WTC11 (cell line): ENCODE measurements at regions of chr19 and their contacts with region 1.

Region 1: GRCh38 chr19:2199215-2199614 is 35.5 kb downstream of the DOT1L start:
- DNase-seq: peak; percentile 62
- ATAC-seq: peak; percentile 89
- H3K4me3 Mint-ChIP-seq: no peak overlapping the region
- H3K27ac Mint-ChIP-seq: peak overlapping the region; percentile 83
- H3K4me1 Mint-ChIP-seq: no peaks in the 10 kb centered on the region
- H3K27me3 Mint-ChIP-seq: no peaks in the 10 kb centered on the region
- CTCF ChIP-seq: peak; percentile 47; the same call in 1 of the 2 replicates

Region 2: GRCh38 chr19:2050991-2051772 is 148.0 kb before region 1 on chr19 and contains the start of gene MKNK2:
- CTCF ChIA-PET with region 1: no interaction called
- POLR2A ChIA-PET with region 1: no interaction called
- DNase-seq: peak; percentile 93
- ATAC-seq: peak; percentile 87
- H3K4me3 Mint-ChIP-seq: peak within 1 kb of the TSS; percentile 70
- H3K27ac Mint-ChIP-seq: peak within 1 kb of the TSS; percentile 92
- H3K4me1 Mint-ChIP-seq: peaks cover 11% of the 10 kb centered on the region
- H3K27me3 Mint-ChIP-seq: no peaks in the 10 kb centered on the region
- CTCF ChIP-seq: peak; percentile 56
- total RNA-seq, gene MKNK2: 150 to 165 TPM (median 163 TPM) in 3 replicates

Region 3: DNA sequence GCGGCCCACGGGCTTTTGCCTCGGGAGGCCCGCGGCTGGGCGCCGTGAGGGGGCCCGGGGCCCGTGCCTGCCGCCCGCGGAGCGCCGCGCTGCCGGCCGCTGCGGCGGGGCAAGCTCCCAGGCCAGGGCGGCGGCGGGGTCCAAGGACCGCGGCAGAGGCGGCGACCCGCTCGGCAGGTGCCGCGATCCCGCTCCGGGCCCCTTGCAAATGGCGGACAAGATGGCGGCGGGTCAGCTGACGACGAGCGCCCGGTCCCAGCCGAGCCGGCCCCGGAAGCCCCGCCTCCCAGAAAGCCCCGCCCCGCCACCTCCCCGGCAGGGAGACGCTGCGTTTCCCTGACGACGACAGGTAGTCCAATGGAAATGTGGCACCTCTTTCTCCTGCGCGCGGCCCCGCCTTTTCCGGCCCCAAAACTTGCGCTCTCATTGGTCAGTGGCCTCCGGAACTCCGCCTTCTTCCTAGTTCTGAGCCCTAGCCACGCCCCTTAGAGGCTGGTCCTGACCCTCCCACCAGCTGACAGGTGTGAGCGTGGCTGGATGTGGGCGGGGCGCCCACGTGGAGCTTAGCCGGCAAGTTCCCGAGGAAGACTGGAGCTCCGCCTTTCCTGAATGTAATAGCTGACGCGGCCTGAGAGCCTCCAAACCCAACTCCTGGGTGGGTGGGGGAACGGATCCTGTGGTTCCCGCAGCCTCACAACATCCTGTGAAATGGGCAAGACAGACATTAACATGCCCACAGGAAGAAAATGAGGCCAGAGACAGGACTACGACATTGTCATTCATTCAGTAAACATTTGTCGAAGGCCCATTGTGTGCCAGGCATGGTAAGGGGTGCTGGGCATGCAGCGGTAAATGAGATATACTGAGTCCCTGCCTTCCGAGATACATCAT is 47.6 kb before region 1 on chr19 and contains the start of gene AP3D1:
- CTCF ChIA-PET with region 1: interaction called, 25 read pairs
- POLR2A ChIA-PET with region 1: interaction called, 4 read pairs
- DNase-seq: peak; percentile 100
- ATAC-seq: peak; percentile 93
- H3K4me3 Mint-ChIP-seq: peak within 1 kb of the TSS; percentile 85
- H3K27ac Mint-ChIP-seq: peak within 1 kb of the TSS; percentile 97
- H3K4me1 Mint-ChIP-seq: peaks cover 28% of the 10 kb centered on the region
- H3K27me3 Mint-ChIP-seq: no peaks in the 10 kb centered on the region
- CTCF ChIP-seq: no peak
- total RNA-seq, gene AP3D1: 160 to 190 TPM (median 163 TPM) in 3 replicates

Region 4: GRCh38 chr19:2168619-2169424 is 30.4 kb before region 1 on chr19:
- CTCF ChIA-PET with region 1: interaction called, 20 read pairs
- POLR2A ChIA-PET with region 1: no interaction called
- DNase-seq: no peak
- ATAC-seq: no peak
- H3K4me3 Mint-ChIP-seq: no peak overlapping the region
- H3K27ac Mint-ChIP-seq: peak overlapping the region; percentile 91; the same call in 1 of the 2 replicates
- H3K4me1 Mint-ChIP-seq: peaks cover 46% of the 10 kb centered on the region
- H3K27me3 Mint-ChIP-seq: no peaks in the 10 kb centered on the region
- CTCF ChIP-seq: no peak

Region 5: GRCh38 chr19:2186071-2186846 is 13.0 kb before region 1 on chr19:
- CTCF ChIA-PET with region 1: interaction called, 19 read pairs
- POLR2A ChIA-PET with region 1: no interaction called
- DNase-seq: no peak
- ATAC-seq: no peak
- H3K4me3 Mint-ChIP-seq: no peak overlapping the region
- H3K27ac Mint-ChIP-seq: peak overlapping the region; percentile 93; the same call in 1 of the 2 replicates
- H3K4me1 Mint-ChIP-seq: no peaks in the 10 kb centered on the region
- H3K27me3 Mint-ChIP-seq: no peaks in the 10 kb centered on the region
- CTCF ChIP-seq: no peak

Region 6: GRCh38 chr19:2253106-2254053 is 54.2 kb after region 1 on chr19:
- CTCF ChIA-PET with region 1: interaction called, 13 read pairs
- POLR2A ChIA-PET with region 1: no interaction called
- DNase-seq: peak; percentile 72
- ATAC-seq: peak; percentile 38
- H3K4me3 Mint-ChIP-seq: peak overlapping the region; percentile 69
- H3K27ac Mint-ChIP-seq: no peak overlapping the region
- H3K4me1 Mint-ChIP-seq: peaks cover 3% of the 10 kb centered on the region; the same call in 1 of the 2 replicates
- H3K27me3 Mint-ChIP-seq: peaks cover 35% of the 10 kb centered on the region
- CTCF ChIP-seq: peak; percentile 50; the same call in 1 of the 2 replicates